GM10248 (cell line): ENCODE measurements at regions of chr12 and their contacts with region 1.

Region 1: GRCh38 chr12:110222027-110222426 is 59.0 kb upstream of the ATP2A2 start:
- DNase-seq: no peak
- CTCF ChIP-seq: no peak

Region 2: DNA sequence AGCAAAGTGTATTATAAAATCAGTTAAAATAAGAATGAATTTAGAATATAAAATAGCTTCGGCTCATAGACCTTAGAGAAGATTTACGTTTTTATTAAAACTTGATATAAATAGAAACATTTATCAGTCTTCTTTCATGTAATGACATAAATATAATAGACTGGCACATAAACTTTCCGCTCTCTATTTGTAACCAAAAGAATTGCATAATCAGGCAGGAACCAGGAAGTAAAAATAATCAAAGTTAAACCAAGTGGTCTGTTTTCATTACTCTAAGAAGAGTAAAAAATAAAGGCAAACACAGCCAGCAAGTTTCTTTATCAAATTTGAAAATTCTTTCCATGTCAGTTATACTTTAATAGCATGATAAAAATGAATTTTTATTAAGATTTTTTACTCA is 12.7 kb after region 1 on chr12:
- CTCF ChIA-PET with region 1: interaction called, 10 read pairs
- POLR2A ChIA-PET with region 1: no interaction called
- DNase-seq: no peak
- CTCF ChIP-seq: no peak

Region 3: DNA sequence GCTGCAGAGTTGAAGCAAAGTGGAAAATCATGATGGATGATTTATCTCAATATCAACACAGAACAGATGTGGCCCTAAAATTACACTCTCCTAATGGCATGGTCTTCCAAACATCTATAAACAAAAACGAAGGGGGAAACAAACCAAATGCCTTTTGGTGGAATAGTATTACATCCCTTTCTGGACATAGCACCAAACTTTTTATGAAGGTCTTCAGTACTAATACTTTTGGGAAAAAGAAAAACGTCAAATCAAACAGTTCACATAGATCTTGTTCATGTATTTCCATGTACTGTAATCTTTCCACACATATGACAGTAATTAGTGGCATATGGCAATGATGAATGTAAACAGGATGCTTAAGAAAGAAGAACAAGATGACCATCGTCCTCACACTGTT is 204.4 kb after region 1 on chr12:
- CTCF ChIA-PET with region 1: no interaction called
- POLR2A ChIA-PET with region 1: no interaction called
- DNase-seq: no peak
- CTCF ChIP-seq: no peak